Activated naive CD4-positive, alpha-beta T cell treated with anti-CD3 and anti-CD28 coated beads, Interleukin-2, amount 10 ng/mL, durations not matched to agents 7 days and 5 days (primary cell): ENCODE measurements at regions of chr22 and their contacts with region 1.

Region 1: DNA sequence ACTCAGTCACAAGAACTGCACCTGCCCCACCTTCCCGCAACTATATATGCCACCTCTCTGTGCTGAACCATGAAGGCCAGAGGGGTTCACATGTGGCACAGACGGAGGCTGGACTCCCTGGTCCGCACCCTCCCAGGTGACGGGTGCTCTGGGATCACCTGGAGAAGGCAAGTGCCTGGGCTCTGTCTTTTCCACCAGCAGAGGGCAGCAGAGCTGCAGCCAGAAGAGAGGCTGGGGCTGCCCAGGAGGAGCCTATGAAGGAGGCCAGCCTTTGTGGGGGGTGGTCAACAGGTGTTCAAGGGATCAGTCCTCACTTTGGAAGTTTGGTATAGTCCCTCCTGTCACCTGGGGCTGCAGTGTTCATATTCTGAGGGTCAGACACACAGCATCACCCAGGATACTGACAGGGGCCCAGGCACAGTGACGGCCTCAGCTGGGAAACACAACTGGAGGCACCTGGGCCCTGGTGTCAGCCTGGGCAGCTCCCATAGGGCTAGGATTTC is 39.2 kb upstream of the IGLL5 start:
- DNase-seq: peak; percentile 83
- H3K4me3 Mint-ChIP-seq: no peak overlapping the region
- H3K27ac Mint-ChIP-seq: no peak overlapping the region
- H3K4me1 Mint-ChIP-seq: peaks cover 14% of the 10 kb centered on the region
- H3K27me3 Mint-ChIP-seq: peaks cover 54% of the 10 kb centered on the region

Region 2: GRCh38 chr22:22787786-22788459 is 60.5 kb before region 1 on chr22:
- CTCF ChIA-PET with region 1: interaction called, 27 read pairs
- DNase-seq: peak; percentile 78
- H3K4me3 Mint-ChIP-seq: no peak overlapping the region
- H3K27ac Mint-ChIP-seq: no peak overlapping the region
- H3K4me1 Mint-ChIP-seq: peaks cover 16% of the 10 kb centered on the region
- H3K27me3 Mint-ChIP-seq: peaks cover 38% of the 10 kb centered on the region

Region 3: DNA sequence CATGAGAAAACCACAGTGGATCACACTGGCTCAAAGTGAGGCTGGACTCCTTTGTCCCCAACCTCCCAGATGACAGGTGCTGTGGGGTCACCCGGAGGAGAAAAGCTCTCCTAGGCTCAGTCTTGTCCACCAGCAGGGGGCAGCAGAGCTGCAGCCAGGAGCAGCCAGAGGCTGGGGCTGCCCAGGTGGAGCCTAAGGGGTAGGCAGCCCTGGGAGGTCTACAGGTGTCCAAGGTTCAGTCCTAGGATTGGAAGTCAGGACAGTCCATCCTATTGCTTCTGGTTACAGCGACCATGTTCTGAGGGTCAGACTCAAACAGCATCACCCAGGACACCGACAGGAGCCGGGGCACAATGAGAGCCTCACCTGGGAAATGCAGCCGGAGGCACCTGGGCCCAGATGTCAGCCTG is 38.4 kb before region 1 on chr22:
- CTCF ChIA-PET with region 1: interaction called, 151 read pairs
- DNase-seq: peak; percentile 85
- H3K4me3 Mint-ChIP-seq: no peak overlapping the region
- H3K27ac Mint-ChIP-seq: no peak overlapping the region
- H3K4me1 Mint-ChIP-seq: peaks cover 23% of the 10 kb centered on the region
- H3K27me3 Mint-ChIP-seq: peaks cover 23% of the 10 kb centered on the region

Region 4: DNA sequence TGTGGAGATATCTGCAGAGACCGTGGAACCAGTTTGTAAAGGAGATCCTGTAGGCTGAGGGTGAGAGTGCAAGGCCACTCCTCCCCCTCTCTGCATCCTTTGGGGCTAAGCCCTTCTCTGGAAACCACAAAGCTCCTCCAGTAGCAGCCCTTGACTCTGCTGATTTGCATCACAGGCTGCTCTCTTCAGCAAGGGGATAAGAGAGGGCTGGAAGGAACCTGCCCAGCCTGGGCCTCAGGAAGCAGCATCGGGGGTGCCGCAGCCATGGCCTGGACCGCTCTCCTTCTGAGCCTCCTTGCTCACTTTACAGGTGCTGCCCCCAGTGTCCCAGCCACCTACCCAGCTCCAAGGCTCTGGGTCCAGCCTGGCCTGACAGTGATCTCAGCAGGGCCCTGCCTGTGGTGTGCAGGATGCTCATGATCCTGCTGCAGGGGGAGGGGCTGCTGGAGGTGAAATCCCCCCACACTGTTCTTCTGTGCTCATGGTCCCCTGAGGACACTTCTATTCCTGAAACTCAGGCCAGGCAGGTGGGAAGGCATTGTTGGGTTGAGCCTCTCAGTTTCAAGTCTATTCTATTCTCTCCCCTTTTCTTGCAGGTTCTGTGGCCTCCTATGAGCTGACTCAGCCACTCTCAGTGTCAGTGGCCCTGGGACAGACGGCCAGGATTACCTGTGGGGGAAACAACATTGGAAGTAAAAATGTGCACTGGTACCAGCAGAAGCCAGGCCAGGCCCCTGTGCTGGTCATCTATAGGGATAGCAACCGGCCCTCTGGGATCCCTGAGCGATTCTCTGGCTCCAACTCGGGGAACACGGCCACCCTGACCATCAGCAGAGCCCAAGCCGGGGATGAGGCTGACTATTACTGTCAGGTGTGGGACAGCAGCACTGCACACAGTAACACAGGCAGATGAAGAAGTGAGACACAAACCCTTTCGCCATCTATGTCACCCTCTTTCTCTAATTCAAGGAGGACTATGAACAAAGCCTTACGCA is 29.3 kb before region 1 on chr22:
- CTCF ChIA-PET with region 1: interaction called, 151 read pairs
- DNase-seq: peak; percentile 80
- H3K4me3 Mint-ChIP-seq: peak overlapping the region; percentile 68
- H3K27ac Mint-ChIP-seq: peak overlapping the region; percentile 99
- H3K4me1 Mint-ChIP-seq: peaks cover 97% of the 10 kb centered on the region
- H3K27me3 Mint-ChIP-seq: no peaks in the 10 kb centered on the region

Region 5: DNA sequence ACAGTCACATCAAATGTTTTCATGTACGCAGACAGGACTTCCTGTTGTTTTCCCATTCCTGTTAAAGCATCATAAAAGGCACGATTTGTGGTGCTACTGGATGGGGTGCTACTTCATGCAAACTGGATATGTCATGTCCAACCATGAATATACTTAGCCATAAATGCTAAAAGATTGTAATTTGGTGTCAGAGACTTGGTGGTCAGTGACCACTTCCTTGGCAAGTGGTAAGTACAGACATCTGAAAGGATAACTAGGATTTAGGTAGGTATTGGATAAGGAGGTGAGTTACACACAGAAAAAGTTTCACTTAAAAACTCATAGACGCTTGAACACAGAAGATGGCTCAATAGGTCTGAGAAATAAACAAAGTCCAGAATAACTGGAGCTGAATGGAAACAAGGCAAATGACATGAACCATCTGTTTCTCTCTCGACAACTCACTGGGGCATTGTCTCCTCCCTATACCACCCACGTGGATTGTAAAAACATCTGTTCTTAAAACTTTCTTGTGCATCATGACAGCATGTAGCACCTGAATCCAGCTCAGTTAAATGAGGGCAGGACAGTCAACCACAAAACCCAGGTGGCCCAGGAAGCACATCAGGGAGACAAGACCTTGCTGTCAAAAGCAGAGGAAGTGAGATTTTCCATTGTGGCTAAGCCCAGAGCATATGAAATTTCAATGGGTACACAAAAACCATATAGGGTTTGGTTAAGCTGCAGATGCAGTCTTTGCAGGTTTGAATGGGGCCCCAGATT is 17.1 kb after region 1 on chr22:
- CTCF ChIA-PET with region 1: interaction called, 13 read pairs
- DNase-seq: peak; percentile 64
- H3K4me3 Mint-ChIP-seq: no peak overlapping the region
- H3K27ac Mint-ChIP-seq: no peak overlapping the region
- H3K4me1 Mint-ChIP-seq: peaks cover 35% of the 10 kb centered on the region
- H3K27me3 Mint-ChIP-seq: peaks cover 51% of the 10 kb centered on the region

Region 6: DNA sequence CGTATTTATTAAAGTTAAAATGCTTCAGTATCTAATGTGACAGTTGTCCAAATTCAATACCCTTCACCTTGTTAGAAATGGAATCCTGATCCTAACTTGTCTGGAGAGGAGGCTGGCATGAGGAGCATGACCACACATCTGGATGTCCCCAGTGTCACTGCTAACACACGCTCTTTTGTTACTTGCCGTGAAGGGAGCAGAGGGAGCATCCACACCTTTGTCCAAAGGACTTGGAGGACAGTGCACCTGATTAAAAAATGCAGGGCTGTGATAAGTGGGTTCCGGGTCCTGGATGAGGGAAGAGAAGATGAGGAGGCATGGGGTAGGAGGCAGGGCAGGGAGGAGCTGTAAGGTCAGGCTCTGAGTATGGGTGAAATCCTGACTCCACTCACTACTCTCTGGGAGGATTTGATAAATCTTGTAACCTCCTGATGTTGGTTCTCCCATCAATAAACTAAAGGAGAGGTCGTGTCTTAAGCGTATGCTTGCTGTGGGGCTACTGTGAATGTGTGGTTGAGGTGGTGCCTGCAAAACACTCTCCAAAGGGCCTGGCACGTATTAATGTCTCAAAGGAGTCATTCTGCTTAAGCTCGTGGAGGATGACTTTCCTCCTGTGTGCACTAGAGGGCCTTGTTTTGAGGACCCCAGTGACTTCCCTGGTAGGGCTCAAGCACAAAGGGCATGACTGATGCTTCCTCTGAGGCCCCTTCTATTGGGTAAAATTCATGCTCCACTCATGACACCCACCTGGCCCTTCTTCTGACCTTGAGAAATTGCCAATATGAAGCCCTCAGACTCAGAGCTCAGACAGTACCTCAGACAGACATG is 22.4 kb after region 1 on chr22:
- CTCF ChIA-PET with region 1: interaction called, 19 read pairs
- DNase-seq: no peak
- H3K4me3 Mint-ChIP-seq: no peak overlapping the region
- H3K27ac Mint-ChIP-seq: no peak overlapping the region
- H3K4me1 Mint-ChIP-seq: peaks cover 11% of the 10 kb centered on the region
- H3K27me3 Mint-ChIP-seq: peaks cover 77% of the 10 kb centered on the region

Region 7: DNA sequence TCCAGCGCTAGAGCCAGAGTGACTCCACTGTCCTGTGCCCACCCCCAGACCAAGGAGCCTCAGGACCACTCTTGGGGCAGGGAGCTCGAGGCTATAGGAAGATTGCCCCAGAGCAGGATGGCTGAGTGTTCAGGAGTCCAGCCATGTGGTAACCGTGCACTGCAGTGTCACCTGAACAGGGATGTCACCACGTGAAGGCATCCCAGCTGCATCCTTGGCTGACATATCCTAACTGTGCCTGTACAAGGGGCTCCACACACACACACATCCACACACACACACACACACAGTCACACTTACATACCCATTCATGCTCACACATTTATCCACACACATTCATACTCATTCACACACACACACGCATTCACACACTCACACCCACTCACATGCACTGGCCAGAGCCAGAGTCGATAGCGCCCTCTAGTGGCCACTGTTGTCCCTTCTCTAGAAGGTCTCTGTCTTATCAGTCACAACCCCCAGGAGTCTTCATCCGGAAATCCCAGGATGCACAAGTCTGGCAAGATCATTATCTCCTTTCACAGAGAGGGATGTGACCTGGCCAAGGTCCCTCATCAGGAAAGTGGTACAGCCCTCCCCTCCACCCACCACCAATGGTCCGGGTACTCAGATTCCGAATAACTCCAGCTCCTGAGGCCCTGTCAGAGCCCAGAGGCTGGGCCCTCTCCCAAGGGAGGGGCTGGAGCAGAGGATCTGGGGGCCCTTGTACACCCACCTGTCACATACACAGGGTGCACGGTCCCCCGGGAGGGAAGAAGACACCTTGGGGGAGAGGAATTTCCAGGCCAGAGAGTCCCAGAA is 94.3 kb after region 1 on chr22:
- CTCF ChIA-PET with region 1: interaction called, 14 read pairs
- DNase-seq: peak; percentile 89
- H3K4me3 Mint-ChIP-seq: no peak overlapping the region
- H3K27ac Mint-ChIP-seq: no peak overlapping the region
- H3K4me1 Mint-ChIP-seq: peaks cover 2% of the 10 kb centered on the region
- H3K27me3 Mint-ChIP-seq: peaks cover 67% of the 10 kb centered on the region

Region 8: GRCh38 chr22:23053051-23053707 is 204.8 kb after region 1 on chr22:
- CTCF ChIA-PET with region 1: no interaction called
- DNase-seq: no peak
- H3K4me3 Mint-ChIP-seq: no peak overlapping the region
- H3K27ac Mint-ChIP-seq: no peak overlapping the region
- H3K4me1 Mint-ChIP-seq: no peaks in the 10 kb centered on the region
- H3K27me3 Mint-ChIP-seq: peaks cover 65% of the 10 kb centered on the region